ENCODE measurements at regions of chr2 and their contacts with region 1.

Region 1: GRCh38 chr2:174465327-174465726 is 21.5 kb downstream of the GPR155 start:
- DNase-seq: no peak
- ATAC-seq: no peak
- H3K4me3 Mint-ChIP-seq: no peak overlapping the region
- H3K27ac Mint-ChIP-seq: no peak overlapping the region
- H3K4me1 Mint-ChIP-seq: no peaks in the 10 kb centered on the region
- H3K27me3 Mint-ChIP-seq: no peaks in the 10 kb centered on the region
- CTCF ChIP-seq: no peak

Region 2: DNA sequence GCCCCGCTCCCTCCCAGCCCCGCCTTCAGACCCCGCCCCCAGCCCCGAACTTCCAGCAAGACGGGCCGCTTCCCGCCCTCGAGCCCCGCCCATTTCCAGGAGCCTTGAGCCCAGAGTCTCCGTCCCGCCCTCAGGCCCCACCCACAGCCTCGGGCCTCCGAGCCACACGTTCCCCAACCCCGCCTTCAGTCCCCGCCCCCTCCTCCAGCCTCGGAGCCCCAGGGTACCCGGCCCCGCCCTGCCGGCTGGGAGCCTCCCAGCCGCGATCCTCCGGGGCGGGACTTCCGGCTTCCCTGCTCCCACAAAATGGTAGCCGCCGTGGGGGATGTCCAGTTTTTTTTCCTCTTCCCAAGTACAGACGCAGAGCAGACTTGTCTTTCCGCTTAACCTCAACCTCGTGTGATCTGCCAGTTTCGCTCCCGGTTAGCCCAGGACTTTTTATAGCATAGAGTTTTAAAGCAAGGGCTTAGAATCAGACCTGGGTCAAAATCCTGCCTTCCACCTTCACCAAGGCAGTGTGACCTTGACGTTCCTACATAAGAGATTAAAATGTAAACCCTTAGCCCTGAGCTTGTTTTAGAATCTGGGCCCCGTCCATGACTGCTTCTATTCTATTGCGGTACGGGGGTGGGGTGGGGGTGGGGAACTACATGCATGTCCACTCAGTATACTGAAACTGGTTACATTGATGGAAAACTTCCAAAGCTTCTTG is 21.9 kb after region 1 on chr2:
- CTCF ChIA-PET with region 1: interaction called, 38 read pairs
- POLR2A ChIA-PET with region 1: interaction called, 3 read pairs
- intact Hi-C with region 1: no loop called
- DNase-seq: peak; percentile 100
- ATAC-seq: peak; percentile 93
- H3K4me3 Mint-ChIP-seq: peak overlapping the region; percentile 95
- H3K27ac Mint-ChIP-seq: peak overlapping the region; percentile 92
- H3K4me1 Mint-ChIP-seq: peaks cover 51% of the 10 kb centered on the region
- H3K27me3 Mint-ChIP-seq: no peaks in the 10 kb centered on the region
- CTCF ChIP-seq: no peak

Region 3: GRCh38 chr2:174522553-174522952 is 57.2 kb after region 1 on chr2:
- CTCF ChIA-PET with region 1: interaction called, 33 read pairs
- POLR2A ChIA-PET with region 1: interaction called, 5 read pairs
- intact Hi-C with region 1: loop called (anchors 1 kb)
- DNase-seq: no peak
- ATAC-seq: no peak
- H3K4me3 Mint-ChIP-seq: no peak overlapping the region
- H3K27ac Mint-ChIP-seq: no peak overlapping the region
- H3K4me1 Mint-ChIP-seq: peaks cover 13% of the 10 kb centered on the region
- H3K27me3 Mint-ChIP-seq: no peaks in the 10 kb centered on the region
- CTCF ChIP-seq: peak; percentile 46

Region 4: GRCh38 chr2:174546581-174547506 is 81.5 kb after region 1 on chr2:
- CTCF ChIA-PET with region 1: interaction called, 136 read pairs
- POLR2A ChIA-PET with region 1: interaction called, 4 read pairs
- intact Hi-C with region 1: loop called (anchors 5 kb)
- DNase-seq: peak; percentile 69
- ATAC-seq: peak; percentile 81
- H3K4me3 Mint-ChIP-seq: no peak overlapping the region
- H3K27ac Mint-ChIP-seq: no peak overlapping the region
- H3K4me1 Mint-ChIP-seq: peaks cover 21% of the 10 kb centered on the region
- H3K27me3 Mint-ChIP-seq: no peaks in the 10 kb centered on the region
- CTCF ChIP-seq: peak; percentile 50

Region 5: DNA sequence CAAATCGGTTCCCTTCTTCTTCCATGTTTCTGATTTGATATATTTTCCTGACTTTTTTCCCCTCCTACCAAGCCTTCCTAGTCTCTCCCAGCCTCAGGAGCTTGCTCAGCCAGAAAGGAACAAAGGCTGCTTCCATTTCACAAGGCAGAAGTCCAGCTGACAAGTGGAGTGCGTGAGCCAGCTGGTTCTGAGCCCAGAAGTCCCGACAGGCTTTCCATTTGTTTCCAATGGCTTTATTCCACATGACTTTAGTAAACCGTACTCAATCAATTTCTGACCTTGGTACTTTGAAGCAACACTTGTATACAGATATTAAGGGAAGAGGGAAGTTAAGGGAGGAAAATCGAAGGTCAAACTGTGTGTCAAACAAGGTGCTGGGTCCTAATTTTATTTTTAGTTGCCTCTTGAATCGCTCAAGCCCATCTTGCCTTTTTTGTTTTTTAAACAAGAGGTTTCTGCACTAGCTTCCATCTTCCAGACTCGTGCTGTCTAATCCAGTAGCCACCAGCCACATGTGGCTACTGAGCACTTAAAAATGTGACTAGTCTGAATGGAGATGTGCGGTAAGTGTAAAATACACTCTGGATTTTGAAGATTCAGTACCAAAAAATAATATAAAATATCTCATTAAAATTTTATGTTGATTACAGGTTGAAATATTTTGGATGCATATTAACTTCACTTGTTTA is 96.1 kb after region 1 on chr2:
- CTCF ChIA-PET with region 1: interaction called, 23 read pairs
- POLR2A ChIA-PET with region 1: no interaction called
- intact Hi-C with region 1: no loop called
- DNase-seq: no peak
- ATAC-seq: no peak
- H3K4me3 Mint-ChIP-seq: no peak overlapping the region
- H3K27ac Mint-ChIP-seq: peak overlapping the region; percentile 47
- H3K4me1 Mint-ChIP-seq: peaks cover 18% of the 10 kb centered on the region
- H3K27me3 Mint-ChIP-seq: no peaks in the 10 kb centered on the region
- CTCF ChIP-seq: no peak

Region 6: GRCh38 chr2:174603280-174603679 is 138.0 kb after region 1 on chr2:
- CTCF ChIA-PET with region 1: interaction called, 12 read pairs
- POLR2A ChIA-PET with region 1: no interaction called
- intact Hi-C with region 1: no loop called
- DNase-seq: peak; percentile 79
- ATAC-seq: peak; percentile 61
- H3K4me3 Mint-ChIP-seq: no peak overlapping the region
- H3K27ac Mint-ChIP-seq: peak overlapping the region; percentile 77
- H3K4me1 Mint-ChIP-seq: peaks cover 91% of the 10 kb centered on the region
- H3K27me3 Mint-ChIP-seq: no peaks in the 10 kb centered on the region
- CTCF ChIP-seq: peak; percentile 76

Region 7: GRCh38 chr2:174623690-174624089 is 158.4 kb after region 1 on chr2:
- CTCF ChIA-PET with region 1: no interaction called
- POLR2A ChIA-PET with region 1: no interaction called
- intact Hi-C with region 1: no loop called
- DNase-seq: no peak
- ATAC-seq: no peak
- H3K4me3 Mint-ChIP-seq: no peak overlapping the region
- H3K27ac Mint-ChIP-seq: peak overlapping the region; percentile 27
- H3K4me1 Mint-ChIP-seq: peaks cover 70% of the 10 kb centered on the region
- H3K27me3 Mint-ChIP-seq: no peaks in the 10 kb centered on the region
- CTCF ChIP-seq: no peak